Gastrocnemius medialis (tissue), 4 donors: ENCODE measurements at regions of chr7 and their contacts with region 1.

Region 1: GRCh38 chr7:139598445-139599049 is 75.1 kb downstream of the CLEC2L start:
- DNase-seq: no peak
- ATAC-seq: no peak
- H3K4me3 ChIP-seq: no peak overlapping the region
- H3K27ac ChIP-seq: no peak overlapping the region
- H3K4me1 ChIP-seq: no peaks in the 10 kb centered on the region
- H3K27me3 ChIP-seq: no peaks in the 10 kb centered on the region
- CTCF ChIP-seq: no peak
- POLR2A ChIP-seq: no peak

Region 2: DNA sequence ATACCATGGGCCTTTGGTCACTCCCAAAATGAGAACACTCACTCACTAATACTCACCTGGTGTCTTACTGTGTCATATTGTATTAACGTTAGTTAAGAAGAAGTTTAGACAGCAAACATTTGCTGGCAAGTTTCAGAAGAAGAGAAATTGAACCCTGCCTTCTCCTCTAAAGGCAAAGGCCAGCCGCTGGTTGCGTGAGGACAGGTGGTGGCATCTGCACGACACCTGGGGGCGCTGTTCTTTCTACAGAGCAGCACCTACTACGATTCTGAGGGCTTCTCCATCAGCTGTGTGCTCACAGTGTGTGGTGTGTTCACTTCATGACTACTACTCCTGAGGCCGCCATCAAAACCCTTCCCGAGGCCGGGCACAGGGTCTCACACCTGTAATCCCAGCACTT is 93.0 kb before region 1 on chr7:
- in situ Hi-C with region 1: loop called in 1 of 4 experiments (anchors 10 kb)
- intact Hi-C with region 1: no loop called
- DNase-seq: no peak
- ATAC-seq: no peak
- H3K4me3 ChIP-seq: no peak overlapping the region
- H3K27ac ChIP-seq: no peak overlapping the region
- H3K4me1 ChIP-seq: no peaks in the 10 kb centered on the region
- H3K27me3 ChIP-seq: no peaks in the 10 kb centered on the region
- CTCF ChIP-seq: no peak
- POLR2A ChIP-seq: no peak